Left cardiac atrium (tissue), 4 donors: ENCODE measurements at regions of chr14 and their contacts with region 1.

Region 1: GRCh38 chr14:75497191-75497590 is 25.1 kb upstream of the BATF start:
- DNase-seq: no peak
- ATAC-seq: no peak

Region 2: DNA sequence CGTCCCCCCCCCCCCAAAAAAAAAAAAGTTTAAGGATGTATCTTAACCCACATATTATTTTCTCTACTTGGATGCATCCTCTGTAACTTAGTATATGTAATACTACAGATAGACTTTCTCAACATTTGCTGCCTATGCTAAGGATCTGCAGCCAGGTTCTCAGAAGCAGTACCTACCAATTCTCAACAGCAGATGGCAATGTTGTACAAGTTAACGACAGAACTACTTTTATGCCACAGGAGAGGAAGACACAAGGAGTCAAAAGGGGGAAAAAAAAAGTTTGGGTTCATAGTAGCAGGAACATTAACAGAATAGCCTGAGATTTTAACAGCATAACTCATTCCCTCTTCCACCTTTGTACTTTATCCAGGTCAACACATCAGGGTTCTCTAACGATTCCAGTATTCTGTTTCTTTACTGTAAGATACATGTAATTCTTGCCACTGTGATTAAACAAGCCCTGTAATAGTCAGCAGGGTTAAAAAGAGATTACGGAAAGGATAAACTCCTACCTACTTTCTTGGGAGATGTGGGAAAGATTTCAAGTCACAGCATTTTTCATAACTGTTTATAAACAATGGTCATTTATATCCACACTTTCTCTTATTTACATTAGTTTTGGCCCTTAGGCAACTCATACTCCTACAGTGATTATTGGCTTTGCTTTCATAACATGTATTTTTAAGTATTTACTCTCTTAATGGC is 364.7 kb before region 1 on chr14:
- intact Hi-C with region 1: loop called in 1 of 2 experiments (anchors 10 kb)
- DNase-seq: no peak
- ATAC-seq: peak; percentile 79 to 84

Region 3: GRCh38 chr14:75383721-75384120 is 113.5 kb before region 1 on chr14:
- intact Hi-C with region 1: no loop called
- DNase-seq: no peak
- ATAC-seq: peak in 1 of 2 donors; percentile 44